ENCODE measurements at regions of chr2 and their contacts with region 1.

Region 1: GRCh38 chr2:203238704-203239526 is at the start of gene CYP20A1:
- DNase-seq: peak; percentile 96
- ATAC-seq: peak; percentile 91
- H3K4me3 ChIP-seq: peak within 1 kb of the TSS; percentile 95
- H3K27ac ChIP-seq: peak within 1 kb of the TSS; percentile 88
- H3K4me1 ChIP-seq: peaks cover 16% of the 10 kb centered on the region
- H3K27me3 ChIP-seq: no peaks in the 10 kb centered on the region
- CTCF ChIP-seq: peak; percentile 44
- total RNA-seq, gene CYP20A1: 12.6 and 14.1 TPM in 2 replicates

Region 2: DNA sequence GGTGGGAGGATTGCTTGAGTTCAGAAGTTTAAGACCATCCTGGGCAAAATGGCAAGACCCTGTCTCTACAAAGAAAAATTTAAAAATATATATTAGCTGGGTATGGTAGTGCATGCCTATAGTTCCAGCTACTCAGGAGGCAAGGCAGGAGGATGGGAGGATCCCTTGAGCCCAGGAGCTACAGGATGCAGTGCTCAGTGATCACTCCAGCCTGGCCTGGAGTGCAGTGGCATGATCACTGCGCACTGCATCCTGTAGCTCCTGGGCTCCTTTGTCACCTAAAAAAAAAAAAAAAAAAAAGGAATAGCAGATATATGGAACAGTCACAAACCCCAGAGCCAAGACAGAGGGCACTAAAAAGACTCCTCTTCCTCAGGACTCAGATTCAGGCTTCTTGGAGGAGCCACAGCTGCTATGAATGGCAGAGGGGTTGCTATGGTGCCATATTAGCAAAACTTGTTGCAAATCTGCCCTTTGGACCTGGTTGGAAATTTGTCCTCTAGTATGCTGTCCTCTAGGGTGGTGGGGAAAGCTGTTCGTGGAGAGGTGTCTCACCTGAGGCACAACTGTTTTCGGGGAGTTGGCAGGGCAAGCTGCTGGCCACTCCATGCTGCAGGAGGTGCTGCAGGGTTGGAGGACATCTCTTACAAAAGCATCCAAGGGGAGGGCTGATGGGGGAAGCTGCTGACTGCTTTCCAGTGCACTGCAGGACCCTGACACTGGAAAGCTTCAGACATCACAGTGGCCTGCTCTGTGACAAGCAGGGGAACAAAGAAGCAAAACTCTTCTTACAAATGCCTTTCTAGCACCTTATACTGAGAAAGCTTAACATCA is 22.6 kb after region 1 on chr2:
- CTCF ChIA-PET with region 1: no interaction called
- POLR2A ChIA-PET with region 1: interaction called, 12 read pairs
- intact Hi-C with region 1: no loop called
- DNase-seq: no peak
- ATAC-seq: no peak
- H3K4me3 ChIP-seq: no peak overlapping the region
- H3K27ac ChIP-seq: no peak overlapping the region
- H3K4me1 ChIP-seq: no peaks in the 10 kb centered on the region
- H3K27me3 ChIP-seq: no peaks in the 10 kb centered on the region
- CTCF ChIP-seq: no peak

Region 3: DNA sequence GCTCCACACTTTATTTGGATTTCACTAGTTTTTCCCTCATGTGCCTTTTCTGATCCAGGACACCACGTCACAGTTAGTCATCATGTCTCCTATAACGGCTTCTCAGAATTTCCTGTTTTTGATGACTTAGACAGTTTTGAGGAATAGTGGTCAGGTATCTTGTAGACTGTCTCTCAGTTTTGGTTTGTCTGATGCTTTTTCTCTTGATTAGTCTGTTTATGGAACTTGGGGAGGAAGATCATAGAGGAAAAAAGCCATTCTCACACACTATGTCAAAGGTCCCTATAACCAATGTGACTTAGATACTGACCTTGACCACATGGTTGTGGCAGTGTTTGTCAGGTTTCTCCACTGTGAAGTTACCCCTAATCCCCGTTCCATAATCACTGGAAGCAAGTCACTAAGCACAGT is 207.2 kb after region 1 on chr2:
- CTCF ChIA-PET with region 1: no interaction called
- POLR2A ChIA-PET with region 1: no interaction called
- intact Hi-C with region 1: loop called (anchors 2 kb)
- DNase-seq: peak; percentile 86
- ATAC-seq: peak; percentile 83
- H3K4me3 ChIP-seq: no peak overlapping the region
- H3K27ac ChIP-seq: peak overlapping the region; percentile 36
- H3K4me1 ChIP-seq: peaks cover 19% of the 10 kb centered on the region
- H3K27me3 ChIP-seq: no peaks in the 10 kb centered on the region
- CTCF ChIP-seq: no peak